Breast epithelium (tissue), 4 donors: ENCODE measurements at regions of chr2 and their contacts with region 1.

Region 1: GRCh38 chr2:101278925-101279324 is 26.2 kb downstream of the CNOT11 start:
- DNase-seq: no peak
- H3K4me3 ChIP-seq: no peak overlapping the region
- H3K27ac ChIP-seq: no peak overlapping the region
- H3K4me1 ChIP-seq: no peaks in the 10 kb centered on the region
- H3K27me3 ChIP-seq: no peaks in the 10 kb centered on the region
- CTCF ChIP-seq: no peak
- POLR2A ChIP-seq: no peak

Region 2: GRCh38 chr2:101300164-101300563 is 21.2 kb after region 1 on chr2:
- intact Hi-C with region 1: loop called (anchors 1 kb)
- DNase-seq: no peak
- H3K4me3 ChIP-seq: no peak overlapping the region
- H3K27ac ChIP-seq: no peak overlapping the region
- H3K4me1 ChIP-seq: peaks cover 0 to 8% of the 10 kb centered on the region in 2 donors
- H3K27me3 ChIP-seq: no peaks in the 10 kb centered on the region
- CTCF ChIP-seq: no peak
- POLR2A ChIP-seq: no peak

Region 3: DNA sequence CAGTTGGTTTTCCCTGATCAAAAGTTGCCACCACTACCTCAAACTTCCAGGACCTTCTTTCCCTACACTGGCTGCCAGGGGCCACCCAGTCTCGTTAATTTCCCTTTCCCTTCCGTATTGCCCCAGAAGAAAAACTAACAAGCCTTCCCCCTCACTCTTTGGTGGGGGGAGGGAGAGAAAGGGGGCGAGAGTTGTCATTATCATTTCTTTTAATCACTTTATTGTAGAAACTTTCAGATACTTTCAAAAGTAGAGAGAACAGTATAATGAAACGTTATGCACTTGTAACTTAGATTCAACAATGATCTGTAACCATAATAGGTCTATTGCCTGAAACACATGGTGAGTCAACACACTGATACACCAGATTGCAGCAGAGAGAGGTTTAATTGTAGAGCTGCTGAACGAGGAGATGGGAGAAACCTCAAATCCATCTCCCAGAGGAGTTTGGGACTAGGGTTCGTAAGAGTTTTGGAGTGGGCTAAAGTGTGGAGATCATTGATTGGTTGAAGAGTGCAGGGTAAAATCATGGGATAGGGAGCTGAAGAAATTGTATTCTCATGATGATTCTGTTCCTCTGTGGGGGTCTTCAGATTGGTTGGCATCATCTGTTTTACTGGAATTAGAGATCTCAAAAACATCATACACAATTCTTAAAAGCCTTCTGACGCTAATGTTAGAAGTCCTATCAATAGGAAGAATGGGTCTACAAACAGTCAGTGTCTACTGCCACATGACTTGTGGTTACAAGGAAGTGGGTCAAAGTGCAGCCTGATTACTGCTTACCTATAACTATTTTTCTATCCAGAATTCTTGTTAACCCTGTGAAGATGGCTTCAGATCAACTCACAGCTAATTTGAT is 32.1 kb after region 1 on chr2:
- intact Hi-C with region 1: no loop called
- DNase-seq: no peak
- H3K4me3 ChIP-seq: no peak overlapping the region
- H3K27ac ChIP-seq: no peak overlapping the region
- H3K4me1 ChIP-seq: peaks cover 0 to 2% of the 10 kb centered on the region in 2 donors
- H3K27me3 ChIP-seq: no peaks in the 10 kb centered on the region
- CTCF ChIP-seq: no peak
- POLR2A ChIP-seq: no peak